ENCODE measurements at regions of chr7 and their contacts with region 1.

Region 1: GRCh38 chr7:47179812-47180515 is 401.9 kb downstream of the TNS3 start:
- DNase-seq: peak; percentile 55 to 75 (median 63)
- H3K4me3 ChIP-seq: no peak overlapping the region
- H3K27ac ChIP-seq: no peak overlapping the region
- H3K4me1 ChIP-seq: peaks cover 7% of the 10 kb centered on the region
- H3K27me3 ChIP-seq: no peaks in the 10 kb centered on the region
- CTCF ChIP-seq: peak; percentile 67 to 78 (median 76)
- EP300 ChIP-seq: no peak
- POLR2A ChIP-seq: no peak

Region 2: GRCh38 chr7:45917658-45918057 is 1262.3 kb before region 1 on chr7:
- intact Hi-C with region 1: loop called (anchors 2 to 5 kb)
- DNase-seq: peak; percentile 77 to 88 (median 87)
- H3K4me3 ChIP-seq: peak overlapping the region; percentile 78
- H3K27ac ChIP-seq: no peak overlapping the region
- H3K4me1 ChIP-seq: peaks cover 4% of the 10 kb centered on the region
- H3K27me3 ChIP-seq: no peaks in the 10 kb centered on the region
- CTCF ChIP-seq: peak; percentile 80 to 87 (median 85)
- EP300 ChIP-seq: no peak
- POLR2A ChIP-seq: no peak

Region 3: GRCh38 chr7:45923290-45923689 is 1256.7 kb before region 1 on chr7:
- intact Hi-C with region 1: loop called in 3 of 4 experiments (anchors 5 kb)
- DNase-seq: peak; percentile 66 to 83 (median 81)
- H3K4me3 ChIP-seq: no peak overlapping the region
- H3K27ac ChIP-seq: no peak overlapping the region
- H3K4me1 ChIP-seq: peaks cover 4% of the 10 kb centered on the region
- H3K27me3 ChIP-seq: no peaks in the 10 kb centered on the region
- CTCF ChIP-seq: peak; percentile 53 to 80 (median 76)
- EP300 ChIP-seq: no peak
- POLR2A ChIP-seq: no peak

Region 4: DNA sequence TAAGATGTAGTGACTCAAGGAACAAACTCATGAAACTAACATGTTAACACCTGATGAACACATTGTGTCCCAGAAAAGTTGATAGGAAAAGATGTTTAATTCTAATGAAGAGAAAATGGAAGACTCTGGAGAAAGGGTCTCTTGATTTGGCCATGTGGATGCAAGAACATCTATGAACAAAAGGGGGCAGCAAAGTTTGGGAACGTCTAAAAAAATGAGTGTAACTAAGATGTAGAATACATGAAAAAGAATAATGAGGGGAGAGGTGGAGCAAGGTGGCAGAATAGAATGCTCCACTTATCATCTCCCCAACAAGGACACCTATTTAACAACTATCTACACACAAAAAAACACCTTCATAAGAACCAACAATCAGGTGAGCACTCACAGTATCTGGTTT is 403.2 kb before region 1 on chr7:
- intact Hi-C with region 1: no loop called
- DNase-seq: no peak
- H3K4me3 ChIP-seq: no peak overlapping the region
- H3K27ac ChIP-seq: no peak overlapping the region
- H3K4me1 ChIP-seq: no peaks in the 10 kb centered on the region
- H3K27me3 ChIP-seq: no peaks in the 10 kb centered on the region
- CTCF ChIP-seq: no peak
- EP300 ChIP-seq: no peak
- POLR2A ChIP-seq: no peak

Region 5: DNA sequence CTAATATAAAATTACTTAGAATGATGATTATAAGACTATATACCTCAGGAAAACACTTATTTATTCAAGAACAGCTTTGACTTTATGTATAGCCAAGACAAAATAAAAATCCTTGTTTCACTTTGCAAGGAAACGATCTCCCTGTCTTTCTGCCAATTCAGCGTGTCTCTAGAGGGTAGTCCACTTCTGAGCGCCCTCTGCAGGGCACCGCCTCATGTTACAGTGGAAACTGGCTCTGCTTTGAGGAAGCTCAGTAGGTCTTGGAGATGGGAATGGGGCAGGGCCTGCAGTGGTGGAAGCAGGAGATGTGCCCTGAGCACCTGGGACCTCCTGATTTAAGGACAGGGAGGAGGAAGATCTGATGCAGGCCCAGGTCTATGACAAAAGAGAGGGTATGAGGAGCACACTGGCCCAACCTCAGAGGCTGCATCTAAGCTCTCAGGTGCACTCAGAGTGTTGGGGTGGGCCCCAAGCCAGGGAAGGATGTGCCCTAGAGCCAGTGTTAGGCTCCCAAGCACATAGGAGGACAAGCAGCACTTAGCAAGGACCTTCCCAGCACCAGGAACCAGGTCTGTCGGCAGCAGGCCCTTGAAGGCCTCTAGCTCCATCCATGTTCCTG is 79.0 kb before region 1 on chr7:
- intact Hi-C with region 1: loop called in 1 of 4 experiments (anchors 10 kb)
- DNase-seq: peak in 1 of 5 donors; percentile 27
- H3K4me3 ChIP-seq: no peak overlapping the region
- H3K27ac ChIP-seq: no peak overlapping the region
- H3K4me1 ChIP-seq: no peaks in the 10 kb centered on the region
- H3K27me3 ChIP-seq: no peaks in the 10 kb centered on the region
- CTCF ChIP-seq: no peak
- EP300 ChIP-seq: no peak
- POLR2A ChIP-seq: no peak